PC-3 (cell line): ENCODE measurements at regions of chr16 and their contacts with region 1.

Region 1: DNA sequence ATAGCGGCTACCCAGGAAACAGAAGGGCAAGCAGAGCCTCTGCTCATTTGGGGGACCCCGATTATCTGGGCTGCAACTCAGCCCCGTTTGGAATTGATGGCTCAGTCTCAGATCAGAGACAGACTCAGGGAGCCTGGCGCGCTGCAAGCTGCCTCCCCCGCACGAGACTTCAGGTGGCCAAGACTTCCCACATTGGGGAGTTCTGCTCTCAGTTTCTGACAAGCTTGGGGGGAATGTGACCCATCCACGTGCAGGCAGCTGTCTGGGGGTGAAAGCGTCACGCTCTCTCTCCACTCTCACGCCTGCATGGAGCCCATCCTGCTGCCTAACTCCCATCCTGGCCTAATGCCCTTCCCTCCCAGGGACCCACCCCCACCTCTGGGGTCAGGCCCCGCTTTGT is 157.6 kb upstream of the GSE1 start:
- DNase-seq: no peak
- ATAC-seq: no peak
- H3K4me3 ChIP-seq: no peak overlapping the region
- H3K27ac ChIP-seq: no peak overlapping the region
- H3K4me1 ChIP-seq: no peaks in the 10 kb centered on the region
- H3K27me3 ChIP-seq: no peaks in the 10 kb centered on the region
- CTCF ChIP-seq: no peak

Region 2: DNA sequence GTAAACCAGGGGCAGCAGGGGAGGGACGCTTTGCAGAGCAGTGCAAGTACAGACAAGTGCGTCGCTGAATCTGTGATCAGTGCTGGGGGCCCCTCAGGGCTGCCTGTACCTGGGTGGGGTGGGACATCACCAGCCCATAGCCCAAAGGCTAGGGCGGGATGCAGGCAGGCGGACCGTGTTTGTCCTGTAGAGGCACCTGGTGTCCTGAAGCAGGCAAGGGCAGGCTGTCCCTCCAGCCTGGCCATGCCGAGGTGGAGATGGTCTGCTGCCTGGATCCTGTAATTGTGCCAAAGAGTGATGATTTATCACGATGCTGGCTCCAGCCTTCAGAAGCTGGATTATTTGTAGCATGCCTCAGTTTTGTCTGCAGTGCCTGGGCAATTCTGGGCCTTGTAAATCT is 19.7 kb after region 1 on chr16:
- CTCF ChIA-PET with region 1: no interaction called
- POLR2A ChIA-PET with region 1: interaction called, 11 read pairs
- intact Hi-C with region 1: no loop called
- DNase-seq: no peak
- ATAC-seq: no peak
- H3K4me3 ChIP-seq: no peak overlapping the region
- H3K27ac ChIP-seq: no peak overlapping the region
- H3K4me1 ChIP-seq: peaks cover 13% of the 10 kb centered on the region
- H3K27me3 ChIP-seq: no peaks in the 10 kb centered on the region
- CTCF ChIP-seq: no peak